CD4-positive, alpha-beta memory T cell (primary cell): ENCODE measurements at regions of chr10 and their contacts with region 1.

Region 1: GRCh38 chr10:128011175-128011979 is 104.5 kb downstream of the PTPRE start:
- DNase-seq: peak; percentile 77 to 89 (median 83)
- H3K4me3 ChIP-seq: no peak overlapping the region
- H3K4me3 Mint-ChIP-seq: peak overlapping the region in 5 of 8 donors; percentile 14 to 50 (median 20)
- H3K27ac ChIP-seq: no peak overlapping the region
- H3K27ac Mint-ChIP-seq: peak overlapping the region in 5 of 7 donors; percentile 10 to 83 (median 62)
- H3K4me1 ChIP-seq: peaks cover 3% of the 10 kb centered on the region
- H3K4me1 Mint-ChIP-seq: peaks cover 6 to 9% (median 7%) of the 10 kb centered on the region in 4 donors
- H3K27me3 ChIP-seq: no peaks in the 10 kb centered on the region
- H3K27me3 Mint-ChIP-seq: peaks cover 2 to 12% of the 10 kb centered on the region in 2 donors

Region 2: DNA sequence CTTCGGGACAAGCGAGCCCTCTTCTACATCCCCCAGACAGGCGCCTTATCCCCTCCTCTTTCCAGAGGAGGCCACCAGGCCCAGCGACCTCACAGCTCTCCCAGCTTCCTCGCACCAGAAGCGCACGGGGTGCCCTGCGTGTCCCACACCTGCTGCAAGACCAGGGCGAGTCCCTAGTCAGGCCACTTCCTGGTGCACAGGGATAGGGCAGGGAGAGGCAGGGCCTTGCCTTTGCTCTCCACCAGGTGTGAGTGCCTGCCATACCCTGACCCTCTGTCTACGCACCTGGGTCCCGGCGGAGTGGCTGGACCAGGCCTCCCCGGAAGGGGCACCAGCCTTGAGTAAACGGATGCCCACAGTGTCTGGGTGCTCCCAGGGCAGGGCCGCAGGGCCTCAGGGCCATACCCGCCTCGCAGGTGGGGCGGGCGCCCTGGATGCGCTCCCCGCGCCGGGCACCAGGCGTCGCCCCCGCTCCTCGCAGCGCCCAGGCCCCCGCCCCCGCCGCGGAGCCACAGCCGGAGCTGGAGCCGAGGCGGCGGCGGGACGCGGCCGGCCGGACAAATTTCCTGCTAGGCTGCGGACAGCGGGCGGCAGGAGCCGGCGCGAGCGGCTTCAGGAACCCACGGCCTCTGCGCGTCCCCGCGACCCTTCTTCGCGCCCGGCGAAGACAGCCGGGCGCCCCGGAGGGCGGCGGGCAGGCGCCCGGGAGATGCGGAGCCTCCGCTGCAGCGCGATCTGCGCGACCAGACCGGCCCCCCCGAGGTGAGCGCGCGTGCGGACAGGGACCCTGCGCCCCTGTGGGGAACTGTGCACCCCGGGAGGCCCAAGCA is 104.6 kb before region 1 on chr10 and contains the start of gene PTPRE:
- CTCF ChIA-PET with region 1: interaction called, 57 read pairs
- POLR2A ChIA-PET with region 1: interaction called, 4 read pairs
- intact Hi-C with region 1: loop called (anchors 1 kb)
- DNase-seq: peak in 4 of 5 donors; percentile 59 to 67 (median 66)
- H3K4me3 ChIP-seq: no peak within 1 kb of the TSS
- H3K4me3 Mint-ChIP-seq: peak within 1 kb of the TSS in 7 of 8 donors; percentile 33 to 68 (median 42)
- H3K27ac ChIP-seq: no peak within 1 kb of the TSS
- H3K27ac Mint-ChIP-seq: no peak within 1 kb of the TSS
- H3K4me1 ChIP-seq: no peaks in the 10 kb centered on the region
- H3K4me1 Mint-ChIP-seq: no peaks in the 10 kb centered on the region
- H3K27me3 ChIP-seq: peaks cover 5% of the 10 kb centered on the region
- H3K27me3 Mint-ChIP-seq: peaks cover 21 to 34% of the 10 kb centered on the region in 2 donors
- total RNA-seq, gene PTPRE: 24.4 to 27.6 TPM

Region 3: GRCh38 chr10:127990846-127991542 is 20.4 kb before region 1 on chr10:
- CTCF ChIA-PET with region 1: interaction called, 4 read pairs
- POLR2A ChIA-PET with region 1: no interaction called
- intact Hi-C with region 1: loop called (anchors 2 kb)
- DNase-seq: peak; percentile 32 to 68 (median 41)
- H3K4me3 ChIP-seq: peak overlapping the region in 1 of 2 donors; percentile 14
- H3K4me3 Mint-ChIP-seq: peak overlapping the region; percentile 68 to 89 (median 82)
- H3K27ac ChIP-seq: peak overlapping the region; percentile 3
- H3K27ac Mint-ChIP-seq: peak overlapping the region; percentile 6 to 86 (median 61)
- H3K4me1 ChIP-seq: peaks cover 20% of the 10 kb centered on the region
- H3K4me1 Mint-ChIP-seq: peaks cover 9 to 24% (median 14%) of the 10 kb centered on the region in 4 donors
- H3K27me3 ChIP-seq: no peaks in the 10 kb centered on the region
- H3K27me3 Mint-ChIP-seq: peaks cover 0 to 2% of the 10 kb centered on the region in 2 donors

Region 4: GRCh38 chr10:128064108-128064969 is 53.0 kb after region 1 on chr10:
- CTCF ChIA-PET with region 1: interaction called, 25 read pairs
- POLR2A ChIA-PET with region 1: interaction called, 5 read pairs
- intact Hi-C with region 1: loop called (anchors 1 kb)
- DNase-seq: peak; percentile 71 to 89 (median 75)
- H3K4me3 ChIP-seq: peak overlapping the region in 1 of 2 donors; percentile 54
- H3K4me3 Mint-ChIP-seq: peak overlapping the region; percentile 71 to 92 (median 80)
- H3K27ac ChIP-seq: peak overlapping the region; percentile 67
- H3K27ac Mint-ChIP-seq: peak overlapping the region; percentile 83 to 95 (median 90)
- H3K4me1 ChIP-seq: peaks cover 56% of the 10 kb centered on the region
- H3K4me1 Mint-ChIP-seq: peaks cover 60 to 87% (median 72%) of the 10 kb centered on the region in 4 donors
- H3K27me3 ChIP-seq: no peaks in the 10 kb centered on the region
- H3K27me3 Mint-ChIP-seq: no peaks in the 10 kb centered on the region

Region 5: GRCh38 chr10:128109707-128110106 is 98.3 kb after region 1 on chr10:
- CTCF ChIA-PET with region 1: no interaction called
- POLR2A ChIA-PET with region 1: no interaction called
- intact Hi-C with region 1: no loop called
- DNase-seq: no peak
- H3K4me3 ChIP-seq: no peak overlapping the region
- H3K4me3 Mint-ChIP-seq: no peak overlapping the region
- H3K27ac ChIP-seq: no peak overlapping the region
- H3K27ac Mint-ChIP-seq: no peak overlapping the region
- H3K4me1 ChIP-seq: peaks cover 9% of the 10 kb centered on the region
- H3K4me1 Mint-ChIP-seq: peaks cover 0 to 10% (median 0%) of the 10 kb centered on the region in 4 donors
- H3K27me3 ChIP-seq: no peaks in the 10 kb centered on the region
- H3K27me3 Mint-ChIP-seq: no peaks in the 10 kb centered on the region

Region 6: DNA sequence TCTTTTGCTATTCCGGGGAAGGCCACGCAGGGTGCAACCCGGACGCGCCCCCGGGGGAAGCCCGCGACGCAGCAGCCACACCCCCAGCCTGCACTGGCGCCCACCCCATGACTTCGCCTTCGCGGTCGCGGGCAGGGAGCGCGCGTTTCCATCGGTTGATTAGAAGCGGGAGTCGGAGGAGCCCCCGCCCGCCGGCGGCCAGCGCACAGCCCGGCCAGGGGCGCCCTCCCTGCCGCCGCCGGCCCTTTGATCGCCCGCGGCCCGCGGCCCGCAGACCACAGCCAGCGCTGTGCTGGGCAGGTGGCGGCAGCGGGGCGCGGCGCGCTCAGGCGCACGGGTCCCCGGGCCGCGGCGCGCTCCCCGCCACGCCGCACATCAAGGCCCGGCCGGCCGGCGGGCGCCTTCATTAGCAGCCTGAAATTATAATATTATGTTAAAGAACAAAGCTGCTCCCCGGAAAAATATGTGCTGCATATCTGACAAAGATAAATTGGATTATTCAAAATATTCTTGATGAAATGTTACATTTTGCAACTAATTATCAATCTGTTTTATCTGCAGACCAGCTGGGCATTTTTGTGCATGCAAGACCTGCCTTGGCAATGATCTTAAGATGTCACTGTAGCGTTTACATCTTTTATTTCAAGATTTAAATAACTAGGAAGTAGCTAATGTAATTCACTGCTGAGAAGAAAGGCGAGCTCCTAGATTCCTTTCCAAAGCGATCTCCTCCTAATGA is 275.6 kb after region 1 on chr10:
- CTCF ChIA-PET with region 1: no interaction called
- POLR2A ChIA-PET with region 1: no interaction called
- intact Hi-C with region 1: no loop called
- DNase-seq: no peak
- H3K4me3 ChIP-seq: no peak overlapping the region
- H3K4me3 Mint-ChIP-seq: no peak overlapping the region
- H3K27ac ChIP-seq: no peak overlapping the region
- H3K27ac Mint-ChIP-seq: no peak overlapping the region
- H3K4me1 ChIP-seq: no peaks in the 10 kb centered on the region
- H3K4me1 Mint-ChIP-seq: peaks cover 0 to 4% (median 0%) of the 10 kb centered on the region in 4 donors
- H3K27me3 ChIP-seq: no peaks in the 10 kb centered on the region
- H3K27me3 Mint-ChIP-seq: peaks cover 31 to 36% of the 10 kb centered on the region in 2 donors

Region 7: DNA sequence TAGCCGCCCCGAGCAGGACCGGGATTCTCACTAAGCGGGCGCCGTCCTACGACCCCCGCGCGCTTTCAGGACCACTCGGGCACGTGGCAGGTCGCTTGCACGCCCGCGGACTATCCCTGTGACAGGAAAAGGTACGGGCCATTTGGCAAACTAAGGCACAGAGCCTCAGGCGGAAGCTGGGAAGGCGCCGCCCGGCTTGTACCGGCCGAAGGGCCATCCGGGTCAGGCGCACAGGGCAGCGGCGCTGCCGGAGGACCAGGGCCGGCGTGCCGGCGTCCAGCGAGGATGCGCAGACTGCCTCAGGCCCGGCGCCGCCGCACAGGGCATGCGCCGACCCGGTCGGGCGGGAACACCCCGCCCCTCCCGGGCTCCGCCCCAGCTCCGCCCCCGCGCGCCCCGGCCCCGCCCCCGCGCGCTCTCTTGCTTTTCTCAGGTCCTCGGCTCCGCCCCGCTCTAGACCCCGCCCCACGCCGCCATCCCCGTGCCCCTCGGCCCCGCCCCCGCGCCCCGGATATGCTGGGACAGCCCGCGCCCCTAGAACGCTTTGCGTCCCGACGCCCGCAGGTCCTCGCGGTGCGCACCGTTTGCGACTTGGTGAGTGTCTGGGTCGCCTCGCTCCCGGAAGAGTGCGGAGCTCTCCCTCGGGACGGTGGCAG is 1455.5 kb after region 1 on chr10 and contains the start of gene MGMT:
- CTCF ChIA-PET with region 1: no interaction called
- POLR2A ChIA-PET with region 1: no interaction called
- intact Hi-C with region 1: no loop called
- DNase-seq: peak; percentile 94 to 98 (median 95)
- H3K4me3 ChIP-seq: peak within 1 kb of the TSS; percentile 20 to 80
- H3K4me3 Mint-ChIP-seq: peak within 1 kb of the TSS; percentile 82 to 90 (median 86)
- H3K27ac ChIP-seq: peak within 1 kb of the TSS; percentile 68
- H3K27ac Mint-ChIP-seq: peak within 1 kb of the TSS; percentile 78 to 88 (median 84)
- H3K4me1 ChIP-seq: peaks cover 17% of the 10 kb centered on the region
- H3K4me1 Mint-ChIP-seq: peaks cover 7 to 27% (median 14%) of the 10 kb centered on the region in 4 donors
- H3K27me3 ChIP-seq: no peaks in the 10 kb centered on the region
- H3K27me3 Mint-ChIP-seq: peaks cover 0 to 2% of the 10 kb centered on the region in 2 donors
- total RNA-seq, gene MGMT: 18.5 to 21.2 TPM

Region 8: GRCh38 chr10:129718548-129719414 is 1707.4 kb after region 1 on chr10:
- CTCF ChIA-PET with region 1: no interaction called
- POLR2A ChIA-PET with region 1: no interaction called
- intact Hi-C with region 1: no loop called
- DNase-seq: no peak
- H3K4me3 ChIP-seq: no peak overlapping the region
- H3K4me3 Mint-ChIP-seq: no peak overlapping the region
- H3K27ac ChIP-seq: no peak overlapping the region
- H3K27ac Mint-ChIP-seq: no peak overlapping the region
- H3K4me1 ChIP-seq: no peaks in the 10 kb centered on the region
- H3K4me1 Mint-ChIP-seq: no peaks in the 10 kb centered on the region
- H3K27me3 ChIP-seq: no peaks in the 10 kb centered on the region
- H3K27me3 Mint-ChIP-seq: no peaks in the 10 kb centered on the region